ENCODE measurements at regions of chr12 and their contacts with region 1.

Region 1: GRCh38 chr12:109573029-109573913 is at the starts of genes MMAB and MVK:
- DNase-seq: peak; percentile 99
- ATAC-seq: peak; percentile 93
- H3K4me3 ChIP-seq: peak within 1 kb of the TSS; percentile 71 to 90
- H3K27ac ChIP-seq: peak within 1 kb of the TSS; percentile 77
- H3K4me1 ChIP-seq: peaks cover 4 to 17% of the 10 kb centered on the region in 2 experiments; a peak in 3 of 4 replicates
- H3K27me3 ChIP-seq: no peaks in the 10 kb centered on the region
- CTCF ChIP-seq: no peak
- POLR2A ChIP-seq: peak; percentile 29
- RAD21 ChIP-seq: no peak
- total RNA-seq, gene MMAB: 34.9 TPM
- total RNA-seq, gene MVK: 17.3 TPM

Region 2: GRCh38 chr12:109713187-109713984 is 140.1 kb after region 1 on chr12 and contains the start of gene FAM222A:
- CTCF ChIA-PET with region 1: no interaction called
- POLR2A ChIA-PET with region 1: no interaction called
- RAD21 ChIA-PET with region 1: no interaction called
- intact Hi-C with region 1: loop called (anchors 1 kb)
- DNase-seq: peak; percentile 93
- ATAC-seq: peak; percentile 91
- H3K4me3 ChIP-seq: peak within 1 kb of the TSS; percentile 48 to 66
- H3K27ac ChIP-seq: peak within 1 kb of the TSS; percentile 45; the same call in 1 of the 2 replicates
- H3K4me1 ChIP-seq: peaks cover 6 to 15% of the 10 kb centered on the region in 2 experiments; a peak in 3 of 4 replicates
- H3K27me3 ChIP-seq: no peaks in the 10 kb centered on the region
- CTCF ChIP-seq: no peak
- POLR2A ChIP-seq: peak; percentile 60
- RAD21 ChIP-seq: no peak
- total RNA-seq, gene FAM222A: 3.7 TPM

Region 3: GRCh38 chr12:109758376-109759075 is 185.3 kb after region 1 on chr12:
- CTCF ChIA-PET with region 1: no interaction called
- POLR2A ChIA-PET with region 1: no interaction called
- RAD21 ChIA-PET with region 1: no interaction called
- intact Hi-C with region 1: no loop called
- DNase-seq: no peak
- ATAC-seq: no peak
- H3K4me3 ChIP-seq: no peak overlapping the region
- H3K27ac ChIP-seq: no peak overlapping the region
- H3K4me1 ChIP-seq: peaks cover 0 to 10% of the 10 kb centered on the region in 2 experiments; a peak in 2 of 4 replicates
- H3K27me3 ChIP-seq: no peaks in the 10 kb centered on the region
- CTCF ChIP-seq: no peak
- POLR2A ChIP-seq: no peak
- RAD21 ChIP-seq: no peak